Caco-2 (cell line): ENCODE measurements at regions of chr12 and their contacts with region 1.

Region 1: DNA sequence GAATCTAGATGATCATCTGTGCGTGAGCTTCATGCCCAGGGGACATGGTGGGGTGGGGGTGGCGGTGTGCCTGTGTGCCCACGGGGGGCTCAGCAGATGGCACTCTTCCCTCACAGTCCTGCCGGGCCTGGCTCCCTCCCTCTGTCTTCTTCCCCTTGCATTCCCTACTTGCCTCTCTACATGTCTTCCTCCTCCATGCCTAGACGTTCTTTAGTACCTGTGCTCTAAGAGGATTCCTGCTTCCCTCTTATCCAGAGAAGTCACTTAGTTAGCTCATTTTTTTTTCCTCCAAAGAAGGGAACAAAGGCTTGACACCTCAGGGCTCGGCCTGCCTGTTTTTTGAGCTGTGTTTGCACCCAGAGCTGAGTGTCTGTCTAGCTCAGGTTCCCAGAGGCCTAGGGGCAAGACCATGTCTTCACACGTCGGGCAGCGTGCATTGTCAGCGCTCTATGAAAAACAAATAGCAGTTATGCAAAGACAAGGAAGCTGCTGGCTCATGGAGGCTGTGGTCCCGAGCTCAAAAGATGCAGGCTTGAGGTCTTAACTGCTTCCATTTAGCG is 48.8 kb downstream of the NINJ2 start:
- DNase-seq: peak; percentile 64 to 67
- H3K4me3 ChIP-seq: no peak overlapping the region
- H3K4me3 Mint-ChIP-seq: no peak overlapping the region
- H3K27ac Mint-ChIP-seq: no peak overlapping the region
- H3K4me1 ChIP-seq: peaks cover 10% of the 10 kb centered on the region; the same call in 1 of the 2 replicates
- H3K4me1 Mint-ChIP-seq: peaks cover 6% of the 10 kb centered on the region
- H3K27me3 ChIP-seq: no peaks in the 10 kb centered on the region
- H3K27me3 Mint-ChIP-seq: no peaks in the 10 kb centered on the region
- CTCF ChIP-seq: peak in 1 of 2 experiments; percentile 29

Region 2: DNA sequence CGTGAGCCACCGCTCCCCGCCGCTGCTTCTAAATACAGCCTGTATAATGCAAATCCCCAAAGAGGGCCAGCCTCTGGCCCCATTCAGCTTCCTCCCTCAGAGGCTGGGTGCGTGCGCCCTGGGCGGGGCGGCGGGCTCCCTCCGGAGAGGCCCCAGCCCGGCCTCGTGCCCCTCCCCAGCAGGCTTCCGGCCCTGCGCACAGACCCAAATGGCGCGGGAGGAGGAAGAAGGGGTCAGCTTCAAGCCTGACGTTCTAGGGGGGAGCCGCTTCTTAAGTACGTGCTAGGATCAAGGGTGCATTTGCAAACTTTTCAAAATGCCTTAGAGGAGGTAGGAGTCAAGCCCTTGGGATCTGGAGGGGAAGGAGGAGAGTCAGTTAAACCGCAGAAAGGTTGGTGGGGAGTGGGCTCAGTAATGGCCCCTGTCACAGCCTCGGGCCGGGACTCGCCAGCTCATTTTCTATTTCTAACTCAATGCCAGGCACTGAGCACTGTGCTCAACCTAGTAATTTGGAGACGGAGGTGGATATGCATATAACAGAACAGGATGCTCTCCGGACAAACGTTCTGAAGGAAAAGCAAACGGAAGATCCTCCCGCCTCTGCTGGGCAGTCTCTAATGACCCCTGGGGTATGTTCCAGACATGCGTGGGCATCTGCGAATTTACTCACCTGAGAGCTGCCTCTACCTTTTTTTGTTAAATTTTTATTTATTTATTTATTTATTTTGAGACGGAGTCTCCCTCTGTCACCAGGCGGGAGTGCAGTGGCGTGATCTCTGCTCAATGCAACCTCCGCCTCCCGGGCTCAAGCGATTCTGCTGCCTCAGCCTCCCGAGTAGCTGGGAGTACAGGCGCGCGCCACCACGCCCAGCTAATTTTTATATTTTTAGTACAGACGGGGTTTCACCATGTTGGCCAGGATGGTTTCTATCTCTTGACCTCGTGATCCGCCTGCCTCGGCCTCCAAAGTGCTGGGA is 16.5 kb after region 1 on chr12:
- CTCF ChIA-PET with region 1: interaction called, 12 read pairs
- POLR2A ChIA-PET with region 1: no interaction called
- intact Hi-C with region 1: loop called (anchors 2 kb)
- DNase-seq: no peak
- H3K4me3 ChIP-seq: no peak overlapping the region
- H3K4me3 Mint-ChIP-seq: peak overlapping the region; percentile 56
- H3K27ac Mint-ChIP-seq: peak overlapping the region; percentile 88
- H3K4me1 ChIP-seq: peaks cover 67% of the 10 kb centered on the region
- H3K4me1 Mint-ChIP-seq: peaks cover 57% of the 10 kb centered on the region
- H3K27me3 ChIP-seq: no peaks in the 10 kb centered on the region
- H3K27me3 Mint-ChIP-seq: no peaks in the 10 kb centered on the region
- CTCF ChIP-seq: no peak

Region 3: GRCh38 chr12:642633-643474 is 28.4 kb after region 1 on chr12:
- CTCF ChIA-PET with region 1: no interaction called
- POLR2A ChIA-PET with region 1: no interaction called
- intact Hi-C with region 1: loop called (anchors 2 kb)
- DNase-seq: peak; percentile 90 to 93
- H3K4me3 ChIP-seq: peak overlapping the region; percentile 56
- H3K4me3 Mint-ChIP-seq: peak overlapping the region; percentile 78
- H3K27ac Mint-ChIP-seq: peak overlapping the region; percentile 62
- H3K4me1 ChIP-seq: peaks cover 20% of the 10 kb centered on the region
- H3K4me1 Mint-ChIP-seq: peaks cover 34% of the 10 kb centered on the region
- H3K27me3 ChIP-seq: no peaks in the 10 kb centered on the region
- H3K27me3 Mint-ChIP-seq: no peaks in the 10 kb centered on the region
- CTCF ChIP-seq: peak; percentile 74 to 89

Region 4: DNA sequence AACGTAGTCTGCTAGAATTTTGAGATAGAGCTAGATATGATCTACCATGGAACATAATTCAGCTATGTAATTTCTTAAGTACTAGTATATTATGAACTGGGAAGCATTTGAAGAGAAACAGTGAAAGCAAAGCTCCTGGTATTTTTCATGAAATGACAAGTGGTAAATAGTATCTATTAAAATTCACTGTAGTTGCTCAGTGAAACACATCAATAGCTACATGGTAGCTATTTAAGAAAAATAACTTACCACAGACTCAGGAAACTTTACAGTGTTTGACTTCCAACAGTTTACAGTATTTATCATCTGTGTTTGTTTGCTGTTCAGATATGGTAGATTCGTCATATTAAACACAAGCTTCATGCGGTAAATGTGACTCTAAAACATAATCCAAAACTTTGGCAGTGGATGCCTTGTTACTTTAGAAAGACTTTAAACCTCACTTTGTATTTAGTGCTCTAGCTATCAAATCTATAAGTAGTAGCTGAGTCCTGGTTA is 163.1 kb after region 1 on chr12:
- CTCF ChIA-PET with region 1: no interaction called
- POLR2A ChIA-PET with region 1: interaction called, 13 read pairs
- intact Hi-C with region 1: no loop called
- DNase-seq: no peak
- H3K4me3 ChIP-seq: no peak overlapping the region
- H3K4me3 Mint-ChIP-seq: no peak overlapping the region
- H3K27ac Mint-ChIP-seq: no peak overlapping the region
- H3K4me1 ChIP-seq: peaks cover 14% of the 10 kb centered on the region
- H3K4me1 Mint-ChIP-seq: peaks cover 45% of the 10 kb centered on the region
- H3K27me3 ChIP-seq: no peaks in the 10 kb centered on the region
- H3K27me3 Mint-ChIP-seq: no peaks in the 10 kb centered on the region
- CTCF ChIP-seq: no peak

Region 5: DNA sequence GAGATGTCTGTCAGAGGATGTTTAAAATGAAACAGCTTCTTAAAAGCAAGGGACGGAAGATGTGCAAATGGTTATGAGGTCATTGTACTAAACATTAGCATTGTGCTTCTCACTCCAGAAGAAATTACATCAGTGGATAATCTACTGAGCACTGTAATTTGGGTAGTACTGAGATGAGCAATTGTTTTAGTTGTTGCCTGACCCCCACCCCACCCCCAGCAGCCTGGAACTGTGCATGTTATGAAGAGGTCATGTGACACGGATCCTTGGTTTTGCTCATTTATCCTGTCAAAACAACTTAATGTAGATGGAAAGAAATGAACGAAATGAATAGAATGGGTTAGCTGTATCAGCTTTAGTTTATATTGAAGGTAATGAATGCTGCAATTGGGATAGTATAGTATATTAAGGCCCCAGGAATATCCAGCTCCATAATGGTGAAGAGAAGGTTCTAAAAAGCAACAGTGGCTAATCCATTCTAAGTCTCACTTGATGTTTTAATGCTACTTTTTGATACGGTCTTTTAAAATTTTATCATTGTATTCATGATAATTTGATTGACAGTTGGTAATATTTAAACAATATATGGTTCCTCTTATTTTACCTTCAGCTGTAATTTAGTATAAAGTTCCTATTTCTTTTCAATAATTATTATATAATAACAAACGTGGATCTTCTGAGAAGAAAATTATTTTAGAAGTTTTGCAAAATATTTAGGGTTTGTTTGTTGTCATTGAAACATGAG is 196.4 kb after region 1 on chr12:
- CTCF ChIA-PET with region 1: interaction called, 10 read pairs
- POLR2A ChIA-PET with region 1: no interaction called
- intact Hi-C with region 1: no loop called
- DNase-seq: no peak
- H3K4me3 ChIP-seq: no peak overlapping the region
- H3K4me3 Mint-ChIP-seq: no peak overlapping the region
- H3K27ac Mint-ChIP-seq: no peak overlapping the region
- H3K4me1 ChIP-seq: peaks cover 9% of the 10 kb centered on the region
- H3K4me1 Mint-ChIP-seq: peaks cover 17% of the 10 kb centered on the region
- H3K27me3 ChIP-seq: no peaks in the 10 kb centered on the region
- H3K27me3 Mint-ChIP-seq: no peaks in the 10 kb centered on the region
- CTCF ChIP-seq: no peak

Region 6: GRCh38 chr12:1059162-1059561 is 444.7 kb after region 1 on chr12:
- CTCF ChIA-PET with region 1: no interaction called
- POLR2A ChIA-PET with region 1: no interaction called
- intact Hi-C with region 1: no loop called
- DNase-seq: no peak
- H3K4me3 ChIP-seq: no peak overlapping the region
- H3K4me3 Mint-ChIP-seq: no peak overlapping the region
- H3K27ac Mint-ChIP-seq: no peak overlapping the region
- H3K4me1 ChIP-seq: peaks cover 11% of the 10 kb centered on the region
- H3K4me1 Mint-ChIP-seq: peaks cover 22% of the 10 kb centered on the region
- H3K27me3 ChIP-seq: no peaks in the 10 kb centered on the region
- H3K27me3 Mint-ChIP-seq: no peaks in the 10 kb centered on the region
- CTCF ChIP-seq: no peak